ENCODE measurements at regions of chr1 and their contacts with region 1.

Region 1: GRCh38 chr1:153465811-153466636 is 5.6 kb upstream of the S100A7 start:
- DNase-seq: peak; percentile 82
- ATAC-seq: peak; percentile 82
- H3K4me3 Mint-ChIP-seq: peak overlapping the region; percentile 41
- H3K27ac Mint-ChIP-seq: peak overlapping the region; percentile 48; the same call in 1 of the 2 replicates
- H3K4me1 Mint-ChIP-seq: peaks cover 29% of the 10 kb centered on the region
- H3K27me3 Mint-ChIP-seq: peaks cover 11% of the 10 kb centered on the region
- CTCF ChIP-seq: peak; percentile 88

Region 2: GRCh38 chr1:153217212-153217611 is 248.8 kb before region 1 on chr1 and contains the start of gene PRR9:
- CTCF ChIA-PET with region 1: no interaction called
- POLR2A ChIA-PET with region 1: no interaction called
- DNase-seq: no peak
- ATAC-seq: no peak
- H3K4me3 Mint-ChIP-seq: no peak within 1 kb of the TSS
- H3K27ac Mint-ChIP-seq: no peak within 1 kb of the TSS
- H3K4me1 Mint-ChIP-seq: 0 out of 2 replicates have a peak, but pooled peaks cover 2% of the 10 kb centered on the region
- H3K27me3 Mint-ChIP-seq: peaks cover 5% of the 10 kb centered on the region; the same call in 1 of the 2 replicates
- CTCF ChIP-seq: no peak
- total RNA-seq, gene PRR9: not detected in 3 replicates

Region 3: GRCh38 chr1:153404768-153405167 is 61.3 kb before region 1 on chr1:
- CTCF ChIA-PET with region 1: interaction called, 13 read pairs
- POLR2A ChIA-PET with region 1: no interaction called
- DNase-seq: peak; percentile 81
- ATAC-seq: peak; percentile 68
- H3K4me3 Mint-ChIP-seq: no peak overlapping the region
- H3K27ac Mint-ChIP-seq: no peak overlapping the region
- H3K4me1 Mint-ChIP-seq: peaks cover 18% of the 10 kb centered on the region
- H3K27me3 Mint-ChIP-seq: peaks cover 40% of the 10 kb centered on the region
- CTCF ChIP-seq: peak; percentile 79

Region 4: DNA sequence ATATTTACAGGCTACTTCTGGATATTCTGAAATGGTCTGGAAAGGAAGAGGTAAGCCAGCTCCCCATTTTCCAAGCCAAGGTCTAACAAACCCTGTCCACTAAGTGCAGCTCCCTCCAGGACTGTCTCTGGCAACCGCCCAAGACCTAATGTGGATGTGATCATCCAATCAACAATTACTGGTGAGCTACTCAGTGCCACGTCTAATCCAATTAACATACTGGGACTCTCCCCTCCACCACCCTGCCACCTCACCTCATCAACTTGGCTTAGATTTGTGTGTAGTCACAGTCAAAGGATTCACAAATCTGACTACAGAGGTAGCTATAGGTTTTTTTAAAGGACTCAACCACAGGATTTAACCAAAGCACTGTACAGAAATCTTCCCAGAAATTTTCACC is 19.8 kb after region 1 on chr1:
- CTCF ChIA-PET with region 1: interaction called, 11 read pairs
- POLR2A ChIA-PET with region 1: no interaction called
- DNase-seq: no peak
- ATAC-seq: no peak
- H3K4me3 Mint-ChIP-seq: no peak overlapping the region
- H3K27ac Mint-ChIP-seq: no peak overlapping the region
- H3K4me1 Mint-ChIP-seq: peaks cover 24% of the 10 kb centered on the region
- H3K27me3 Mint-ChIP-seq: no peaks in the 10 kb centered on the region; the same call in none of the 2 replicates
- CTCF ChIP-seq: no peak